ENCODE measurements at regions of chr7 and their contacts with region 1.

Region 1: DNA sequence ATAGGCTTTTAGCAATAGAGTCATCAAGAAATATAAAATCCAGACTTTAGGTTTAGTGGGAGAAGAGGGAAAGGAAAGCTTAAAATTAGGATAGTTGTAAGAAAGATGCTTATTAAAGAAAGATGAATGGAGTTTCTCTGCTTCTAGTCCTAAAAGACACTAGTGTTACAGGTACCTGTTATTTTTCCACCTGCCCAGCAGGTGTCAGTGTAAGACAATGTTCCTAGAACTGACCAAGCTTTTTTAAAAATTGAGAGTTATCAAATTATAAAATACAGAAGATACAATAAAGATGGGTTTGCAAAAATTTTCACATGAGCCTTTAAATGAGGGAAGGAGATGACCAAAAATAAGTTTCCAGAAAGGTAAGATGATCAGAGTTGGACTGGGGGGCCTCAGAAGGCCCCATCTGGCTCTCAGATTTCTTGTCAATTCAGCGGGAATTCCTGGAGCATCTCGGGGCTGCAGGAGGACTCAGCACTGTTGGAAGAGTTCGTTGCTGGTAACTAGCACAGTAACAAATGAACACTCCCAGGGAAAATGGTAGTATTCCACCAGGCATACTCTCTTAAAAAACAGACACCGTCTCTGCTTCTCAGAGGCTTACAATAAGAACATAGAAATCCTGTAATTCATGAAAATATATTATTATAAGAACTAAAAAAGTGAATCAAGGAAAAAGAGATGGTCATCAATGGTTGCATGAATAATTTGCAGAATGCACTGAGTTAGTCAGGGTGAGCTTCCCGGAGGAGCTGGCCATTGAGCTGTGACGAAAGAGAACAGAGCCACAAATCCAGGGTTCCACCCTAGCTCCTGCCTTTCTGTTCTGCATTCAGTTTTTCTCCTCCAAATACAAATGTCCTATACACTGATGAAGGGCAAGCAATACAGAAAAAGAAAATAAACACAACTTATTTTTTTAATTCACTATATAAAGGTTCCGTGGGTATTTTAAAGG is 71.8 kb upstream of the PIK3CG start:
- DNase-seq: no peak
- H3K4me3 Mint-ChIP-seq: no peak overlapping the region
- H3K27ac Mint-ChIP-seq: no peak overlapping the region
- H3K4me1 Mint-ChIP-seq: no peaks in the 10 kb centered on the region
- H3K27me3 Mint-ChIP-seq: no peaks in the 10 kb centered on the region

Region 2: GRCh38 chr7:106767498-106768323 is 25.6 kb before region 1 on chr7:
- intact Hi-C with region 1: no loop called
- DNase-seq: no peak
- H3K4me3 Mint-ChIP-seq: peak overlapping the region; percentile 46
- H3K27ac Mint-ChIP-seq: peak overlapping the region; percentile 73
- H3K4me1 Mint-ChIP-seq: peaks cover 53% of the 10 kb centered on the region
- H3K27me3 Mint-ChIP-seq: no peaks in the 10 kb centered on the region

Region 3: GRCh38 chr7:106870983-106871410 is 77.7 kb after region 1 on chr7:
- intact Hi-C with region 1: loop called (anchors 2 kb)
- DNase-seq: no peak
- H3K4me3 Mint-ChIP-seq: peak overlapping the region; percentile 43
- H3K27ac Mint-ChIP-seq: peak overlapping the region; percentile 64
- H3K4me1 Mint-ChIP-seq: peaks cover 75% of the 10 kb centered on the region
- H3K27me3 Mint-ChIP-seq: no peaks in the 10 kb centered on the region

Region 4: DNA sequence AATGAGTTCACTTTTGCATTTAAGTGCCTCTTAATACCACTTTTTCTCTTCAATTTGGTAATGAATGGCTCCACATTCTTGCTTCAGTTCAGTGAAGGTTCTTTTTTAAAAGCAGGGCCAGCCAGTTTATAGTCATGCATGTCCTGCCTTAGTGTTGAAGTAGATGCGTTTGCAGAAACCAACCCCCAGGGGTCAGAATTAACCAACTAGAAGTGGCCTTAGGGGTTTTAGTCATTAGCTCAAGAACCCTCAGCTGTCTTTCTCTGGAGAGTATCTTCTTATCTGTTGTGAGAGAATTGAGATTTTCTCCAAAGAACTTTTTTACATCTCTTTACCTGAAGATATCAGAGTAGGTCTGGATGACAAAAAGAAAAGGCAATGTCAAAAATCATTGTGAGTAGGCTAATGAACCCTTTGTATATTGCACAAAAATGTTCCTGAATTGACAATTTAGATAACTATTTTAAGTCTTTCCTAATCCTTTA is 154.0 kb after region 1 on chr7:
- intact Hi-C with region 1: loop called (anchors 5 kb)
- DNase-seq: peak; percentile 1
- H3K4me3 Mint-ChIP-seq: no peak overlapping the region
- H3K27ac Mint-ChIP-seq: no peak overlapping the region
- H3K4me1 Mint-ChIP-seq: no peaks in the 10 kb centered on the region
- H3K27me3 Mint-ChIP-seq: peaks cover 3% of the 10 kb centered on the region

Region 5: GRCh38 chr7:107044347-107045194 is 251.3 kb after region 1 on chr7 and contains the start of gene PRKAR2B:
- intact Hi-C with region 1: loop called (anchors 5 kb)
- DNase-seq: peak; percentile 67
- H3K4me3 Mint-ChIP-seq: peak within 1 kb of the TSS; percentile 88
- H3K27ac Mint-ChIP-seq: peak within 1 kb of the TSS; percentile 53
- H3K4me1 Mint-ChIP-seq: peaks cover 13% of the 10 kb centered on the region
- H3K27me3 Mint-ChIP-seq: peaks cover 43% of the 10 kb centered on the region
- total RNA-seq, gene PRKAR2B: 0.42 and 1.0 TPM in 2 replicates

Region 6: DNA sequence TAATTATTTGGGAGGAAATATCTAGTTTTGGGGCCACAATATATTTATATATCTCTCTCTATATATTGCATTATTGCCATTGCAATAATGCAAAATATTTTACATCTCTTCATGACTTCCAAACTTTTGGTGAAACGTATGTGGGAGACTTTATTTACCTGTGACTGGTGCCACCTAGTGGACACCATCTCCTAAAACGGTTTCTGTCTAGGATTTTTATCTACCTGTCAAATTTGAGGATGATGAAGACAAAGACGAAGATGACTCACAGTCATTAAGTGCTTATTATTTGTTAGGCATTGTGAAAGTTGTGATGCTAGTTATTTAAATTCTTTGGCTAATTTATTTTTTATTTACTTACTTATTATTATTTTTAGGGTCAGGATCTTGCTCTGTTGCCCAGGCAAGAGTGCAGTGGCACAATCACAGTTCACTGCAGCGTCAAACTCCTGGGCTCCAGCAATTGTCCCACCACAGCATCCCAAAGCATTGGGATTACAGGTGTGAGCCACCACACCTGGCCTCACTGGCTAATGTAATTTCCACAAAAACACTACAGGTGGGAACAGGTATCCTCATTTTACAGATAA is 932.0 kb after region 1 on chr7:
- intact Hi-C with region 1: loop called (anchors 1 kb)
- DNase-seq: peak; percentile 25
- H3K4me3 Mint-ChIP-seq: no peak overlapping the region
- H3K27ac Mint-ChIP-seq: no peak overlapping the region
- H3K4me1 Mint-ChIP-seq: no peaks in the 10 kb centered on the region
- H3K27me3 Mint-ChIP-seq: peaks cover 16% of the 10 kb centered on the region

Measured in activated T-helper 1 cell treated with anti-CD3 and anti-CD28 coated beads, Interleukin-12 subunit alpha, Interleukin-12 subunit beta, Interleukin-2, Interleukin-4 antibody, amounts not matched to agents 30 ng/mL and 10 ng/mL and 1 ng/mL, durations not matched to agents 14 hours and 24 hours and 36 hours (primary cell).